ENCODE measurements at regions of chr17 and their contacts with region 1.

Region 1: GRCh38 chr17:78343187-78343542 is 16.7 kb downstream of the SOCS3 start:
- DNase-seq: peak; percentile 78
- H3K4me3 Mint-ChIP-seq: peak overlapping the region; percentile 71
- H3K27ac Mint-ChIP-seq: peak overlapping the region; percentile 87
- H3K4me1 Mint-ChIP-seq: peaks cover 54% of the 10 kb centered on the region
- H3K27me3 Mint-ChIP-seq: peaks cover 6% of the 10 kb centered on the region

Region 2: GRCh38 chr17:78278139-78279127 is 64.7 kb before region 1 on chr17:
- intact Hi-C with region 1: no loop called
- DNase-seq: no peak
- H3K4me3 Mint-ChIP-seq: no peak overlapping the region
- H3K27ac Mint-ChIP-seq: no peak overlapping the region
- H3K4me1 Mint-ChIP-seq: peaks cover 22% of the 10 kb centered on the region
- H3K27me3 Mint-ChIP-seq: peaks cover 2% of the 10 kb centered on the region

Region 3: GRCh38 chr17:78355045-78355641 is 12.0 kb after region 1 on chr17:
- intact Hi-C with region 1: loop called (anchors 1 kb)
- DNase-seq: peak; percentile 88
- H3K4me3 Mint-ChIP-seq: peak overlapping the region; percentile 92
- H3K27ac Mint-ChIP-seq: peak overlapping the region; percentile 95
- H3K4me1 Mint-ChIP-seq: peaks cover 53% of the 10 kb centered on the region
- H3K27me3 Mint-ChIP-seq: no peaks in the 10 kb centered on the region

Measured in activated CD4-positive, alpha-beta T cell treated with anti-CD3 and anti-CD28 coated beads, Interleukin-2, amount 10 ng/mL, durations not matched to agents 24 days and 14 days (primary cell).